Caco-2 (cell line): ENCODE measurements at regions of chr18 and their contacts with region 1.

Region 1: DNA sequence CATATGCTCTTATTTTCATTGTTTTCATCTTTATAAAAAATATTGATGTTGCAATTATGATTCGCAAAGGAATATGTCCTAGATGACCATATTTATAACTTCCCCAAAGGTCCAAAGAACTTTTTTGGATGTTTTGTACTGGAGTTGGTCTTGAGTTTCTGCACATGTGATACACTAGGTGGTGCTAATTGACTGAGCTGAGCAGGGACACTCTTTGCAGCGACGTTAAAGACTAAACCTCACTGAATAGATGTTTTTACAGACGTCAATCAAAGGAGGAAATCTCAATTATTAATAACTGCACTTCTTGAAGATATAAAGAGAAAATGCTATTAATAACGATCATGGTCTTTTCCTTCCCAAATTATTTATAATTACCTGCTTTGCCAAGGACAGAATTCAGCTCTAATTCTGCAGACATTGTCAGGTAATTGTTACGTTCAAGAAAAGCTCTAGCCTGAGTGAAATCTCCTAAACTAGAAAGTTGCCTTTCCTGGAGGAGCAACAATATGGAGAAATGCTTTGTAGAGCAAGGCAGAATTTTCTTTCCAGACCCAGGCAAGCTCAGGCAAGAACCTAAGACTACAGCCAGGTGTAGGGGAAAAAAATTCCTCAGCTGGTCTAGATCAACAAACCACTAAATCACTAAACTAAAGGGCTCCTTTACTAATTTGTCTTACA is 119.3 kb upstream of the RBBP8 start:
- DNase-seq: peak in 1 of 2 experiments; percentile 56
- H3K4me3 ChIP-seq: no peak overlapping the region
- H3K4me3 Mint-ChIP-seq: no peak overlapping the region
- H3K27ac Mint-ChIP-seq: no peak overlapping the region
- H3K4me1 ChIP-seq: peaks cover 25% of the 10 kb centered on the region
- H3K4me1 Mint-ChIP-seq: peaks cover 6% of the 10 kb centered on the region
- H3K27me3 ChIP-seq: no peaks in the 10 kb centered on the region
- H3K27me3 Mint-ChIP-seq: no peaks in the 10 kb centered on the region
- CTCF ChIP-seq: peak; percentile 58 to 65

Region 2: DNA sequence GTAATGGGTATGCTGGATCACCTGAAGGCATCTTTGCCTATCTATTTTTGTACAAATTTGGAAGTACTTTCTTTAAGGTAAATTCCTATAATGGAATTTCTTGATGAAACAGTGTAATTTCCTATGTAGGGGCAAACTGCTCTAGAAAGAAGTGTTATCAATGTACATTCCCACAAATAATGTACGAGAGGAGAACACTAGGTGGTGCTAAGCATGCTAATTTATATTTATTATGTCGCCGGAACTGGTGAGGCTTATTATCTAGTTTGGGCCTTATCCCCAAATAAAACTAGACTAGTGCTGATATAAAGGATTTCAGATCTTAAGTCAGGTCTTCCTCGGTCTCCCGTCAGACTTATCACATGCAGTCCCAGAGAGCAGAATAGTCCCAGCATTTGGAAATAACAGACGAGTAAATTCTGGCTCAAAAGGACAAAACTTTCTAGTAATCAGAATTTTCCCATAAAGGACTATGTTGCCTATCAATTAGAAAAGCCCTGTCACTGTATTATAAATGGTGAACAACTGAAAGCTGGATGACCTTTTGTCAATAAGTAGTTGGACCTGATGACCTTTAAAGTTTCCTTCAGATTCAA is 32.4 kb after region 1 on chr18:
- CTCF ChIA-PET with region 1: no interaction called
- POLR2A ChIA-PET with region 1: no interaction called
- intact Hi-C with region 1: no loop called
- DNase-seq: peak in 1 of 2 experiments; percentile 15
- H3K4me3 ChIP-seq: no peak overlapping the region
- H3K4me3 Mint-ChIP-seq: no peak overlapping the region
- H3K27ac Mint-ChIP-seq: no peak overlapping the region
- H3K4me1 ChIP-seq: peaks cover 37% of the 10 kb centered on the region
- H3K4me1 Mint-ChIP-seq: peaks cover 17% of the 10 kb centered on the region
- H3K27me3 ChIP-seq: no peaks in the 10 kb centered on the region
- H3K27me3 Mint-ChIP-seq: no peaks in the 10 kb centered on the region
- CTCF ChIP-seq: peak in 1 of 2 experiments; percentile 45

Region 3: DNA sequence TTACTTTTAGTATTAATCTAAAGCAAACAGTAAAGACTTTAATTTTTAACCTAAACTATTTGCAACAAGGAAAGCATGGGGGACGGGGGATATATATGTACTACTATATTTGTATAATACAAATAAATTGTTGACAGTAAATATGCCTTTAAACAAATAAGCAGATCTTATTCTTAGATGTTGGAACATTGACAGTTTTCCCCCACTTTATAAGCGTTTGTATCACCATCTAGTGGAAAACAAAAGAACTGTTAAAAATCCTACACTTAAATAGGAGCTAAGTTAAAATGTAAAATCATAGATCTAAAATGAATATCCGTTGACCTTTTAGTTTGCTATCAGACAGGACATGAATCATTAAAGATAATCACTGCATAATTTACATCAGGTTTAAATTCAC is 169.4 kb after region 1 on chr18:
- CTCF ChIA-PET with region 1: interaction called, 23 read pairs
- POLR2A ChIA-PET with region 1: no interaction called
- intact Hi-C with region 1: loop called (anchors 1 kb)
- DNase-seq: no peak
- H3K4me3 ChIP-seq: no peak overlapping the region
- H3K4me3 Mint-ChIP-seq: no peak overlapping the region
- H3K27ac Mint-ChIP-seq: no peak overlapping the region
- H3K4me1 ChIP-seq: no peaks in the 10 kb centered on the region
- H3K4me1 Mint-ChIP-seq: peaks cover 6% of the 10 kb centered on the region
- H3K27me3 ChIP-seq: no peaks in the 10 kb centered on the region
- H3K27me3 Mint-ChIP-seq: no peaks in the 10 kb centered on the region
- CTCF ChIP-seq: peak; percentile 30 to 43

Region 4: GRCh38 chr18:23071285-23071684 is 257.5 kb after region 1 on chr18:
- CTCF ChIA-PET with region 1: no interaction called
- POLR2A ChIA-PET with region 1: no interaction called
- intact Hi-C with region 1: loop called (anchors 10 kb)
- DNase-seq: no peak
- H3K4me3 ChIP-seq: no peak overlapping the region
- H3K4me3 Mint-ChIP-seq: no peak overlapping the region
- H3K27ac Mint-ChIP-seq: no peak overlapping the region
- H3K4me1 ChIP-seq: no peaks in the 10 kb centered on the region
- H3K4me1 Mint-ChIP-seq: peaks cover 7% of the 10 kb centered on the region
- H3K27me3 ChIP-seq: no peaks in the 10 kb centered on the region
- H3K27me3 Mint-ChIP-seq: no peaks in the 10 kb centered on the region
- CTCF ChIP-seq: no peak

Region 5: DNA sequence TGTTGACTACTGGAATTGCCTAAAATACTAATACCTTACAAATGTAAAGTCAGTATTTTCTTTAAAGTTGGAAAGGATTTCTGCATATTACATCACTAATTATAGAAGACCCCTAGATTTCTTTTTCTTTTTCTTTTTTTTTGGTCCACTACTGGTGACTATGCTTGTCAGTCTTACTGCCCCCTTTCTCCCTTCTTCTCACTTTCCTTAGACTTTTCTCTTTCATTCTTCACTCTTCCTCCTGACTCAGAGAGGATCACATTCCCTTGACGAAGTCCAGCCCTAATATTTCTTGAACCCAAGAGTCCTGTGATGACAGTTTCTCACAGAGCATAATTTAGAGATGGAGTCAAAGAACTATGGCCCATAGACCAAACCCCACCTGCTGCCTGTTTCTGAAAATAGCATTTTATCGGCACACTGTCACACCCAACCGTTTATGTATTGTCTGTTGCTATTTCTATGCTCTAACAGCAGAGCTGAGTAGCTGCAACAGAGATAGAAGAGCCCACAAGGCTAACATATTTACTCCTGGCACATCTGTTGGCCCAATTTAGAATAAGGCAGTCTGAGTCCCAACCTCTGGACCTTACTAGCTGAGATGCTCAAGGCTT is 598.7 kb after region 1 on chr18:
- CTCF ChIA-PET with region 1: no interaction called
- POLR2A ChIA-PET with region 1: no interaction called
- intact Hi-C with region 1: loop called (anchors 5 kb)
- DNase-seq: no peak
- H3K4me3 ChIP-seq: no peak overlapping the region
- H3K4me3 Mint-ChIP-seq: no peak overlapping the region
- H3K27ac Mint-ChIP-seq: no peak overlapping the region
- H3K4me1 ChIP-seq: no peaks in the 10 kb centered on the region
- H3K4me1 Mint-ChIP-seq: no peaks in the 10 kb centered on the region
- H3K27me3 ChIP-seq: no peaks in the 10 kb centered on the region
- H3K27me3 Mint-ChIP-seq: no peaks in the 10 kb centered on the region
- CTCF ChIP-seq: no peak